ENCODE measurements at regions of chr19 and their contacts with region 1.

Region 1: GRCh38 chr19:38658462-38659306 is 11.2 kb downstream of the ACTN4 start:
- DNase-seq: peak in 1 of 2 donors; percentile 59
- ATAC-seq: peak; percentile 74 to 79
- H3K4me3 ChIP-seq: peak overlapping the region in 2 of 4 donors; percentile 12 to 18
- H3K27ac ChIP-seq: peak overlapping the region; percentile 98 to 100 (median 99)
- H3K4me1 ChIP-seq: peaks cover 97 to 98% of the 10 kb centered on the region in 2 donors
- H3K27me3 ChIP-seq: no peaks in the 10 kb centered on the region
- CTCF ChIP-seq: no peak
- POLR2A ChIP-seq: peak in 1 of 2 donors; percentile 7

Region 2: GRCh38 chr19:38544034-38544958 is 114.4 kb before region 1 on chr19:
- in situ Hi-C with region 1: no loop called
- intact Hi-C with region 1: no loop called
- DNase-seq: peak; percentile 69 to 84
- ATAC-seq: peak; percentile 90 to 93
- H3K4me3 ChIP-seq: peak overlapping the region in 1 of 4 donors; percentile 16
- H3K27ac ChIP-seq: peak overlapping the region; percentile 56 to 77 (median 60)
- H3K4me1 ChIP-seq: peaks cover 8 to 9% of the 10 kb centered on the region in 2 donors
- H3K27me3 ChIP-seq: no peaks in the 10 kb centered on the region
- CTCF ChIP-seq: peak in 4 of 5 experiments; percentile 20 to 50 (median 26)
- POLR2A ChIP-seq: no peak

Region 3: DNA sequence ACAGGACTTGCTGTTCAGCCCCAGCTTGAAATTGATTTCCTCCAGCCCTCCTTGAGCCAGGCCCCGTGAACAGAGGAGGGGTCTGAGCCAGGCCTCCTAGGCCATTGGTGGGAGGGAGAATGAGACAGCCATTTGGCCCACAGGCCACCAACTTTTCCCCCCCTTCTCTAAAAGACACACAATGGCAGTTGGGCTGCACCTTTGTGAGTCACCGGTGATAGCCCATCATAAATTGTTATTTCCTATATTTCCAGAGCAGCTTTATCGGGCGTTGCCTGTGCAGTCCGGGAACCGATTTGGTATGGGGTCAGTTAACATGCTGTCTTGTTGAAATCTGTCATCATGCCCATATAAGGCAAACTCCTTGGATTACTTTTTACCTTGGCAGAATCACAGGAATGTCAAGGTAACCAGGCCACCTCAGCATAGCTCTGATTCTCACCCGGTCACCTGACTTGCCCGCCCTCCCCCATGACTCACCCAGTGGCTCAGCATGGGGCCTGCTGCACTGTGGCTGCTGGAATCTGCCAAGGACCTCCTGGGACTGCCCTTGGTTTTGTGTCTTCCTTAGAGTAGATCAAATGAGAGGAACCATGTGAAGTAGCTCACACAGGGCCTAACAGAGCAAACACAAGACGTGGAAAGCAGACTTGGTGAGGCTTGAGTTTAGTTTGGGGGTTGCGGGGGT is 24.9 kb after region 1 on chr19:
- in situ Hi-C with region 1: no loop called
- intact Hi-C with region 1: loop called (anchors 2 kb)
- DNase-seq: peak; percentile 48 to 84
- ATAC-seq: peak; percentile 38 to 45
- H3K4me3 ChIP-seq: peak overlapping the region in 2 of 4 donors; percentile 24 to 27
- H3K27ac ChIP-seq: peak overlapping the region; percentile 89 to 98 (median 96)
- H3K4me1 ChIP-seq: peaks cover 89 to 94% of the 10 kb centered on the region in 2 donors
- H3K27me3 ChIP-seq: no peaks in the 10 kb centered on the region
- CTCF ChIP-seq: no peak
- POLR2A ChIP-seq: no peak

Measured in gastrocnemius medialis (tissue), 4 donors.